Body of pancreas (tissue), 4 donors: ENCODE measurements at regions of chr2 and their contacts with region 1.

Region 1: GRCh38 chr2:73939419-73939818 is 12.7 kb downstream of the DGUOK start:
- DNase-seq: peak; percentile 28 to 43 (median 34)
- ATAC-seq: peak; percentile 48
- H3K4me3 ChIP-seq: no peak overlapping the region
- H3K27ac ChIP-seq: no peak overlapping the region
- H3K4me1 ChIP-seq: peaks cover 14% of the 10 kb centered on the region
- H3K27me3 ChIP-seq: no peaks in the 10 kb centered on the region
- CTCF ChIP-seq: peak in 3 of 7 experiments; percentile 23 to 36 (median 33)
- POLR2A ChIP-seq: no peak

Region 2: GRCh38 chr2:73985308-73986084 is 46.1 kb after region 1 on chr2:
- intact Hi-C with region 1: loop called (anchors 10 kb)
- DNase-seq: peak in 3 of 4 donors; percentile 29 to 54 (median 34)
- ATAC-seq: peak; percentile 5
- H3K4me3 ChIP-seq: peak overlapping the region in 1 of 2 donors; percentile 11
- H3K27ac ChIP-seq: peak overlapping the region; percentile 63 to 99 (median 98)
- H3K4me1 ChIP-seq: peaks cover 69% of the 10 kb centered on the region
- H3K27me3 ChIP-seq: no peaks in the 10 kb centered on the region
- CTCF ChIP-seq: no peak
- POLR2A ChIP-seq: peak in 2 of 3 donors; percentile 26 to 52